ENCODE measurements at regions of chr18 and their contacts with region 1.

Region 1: DNA sequence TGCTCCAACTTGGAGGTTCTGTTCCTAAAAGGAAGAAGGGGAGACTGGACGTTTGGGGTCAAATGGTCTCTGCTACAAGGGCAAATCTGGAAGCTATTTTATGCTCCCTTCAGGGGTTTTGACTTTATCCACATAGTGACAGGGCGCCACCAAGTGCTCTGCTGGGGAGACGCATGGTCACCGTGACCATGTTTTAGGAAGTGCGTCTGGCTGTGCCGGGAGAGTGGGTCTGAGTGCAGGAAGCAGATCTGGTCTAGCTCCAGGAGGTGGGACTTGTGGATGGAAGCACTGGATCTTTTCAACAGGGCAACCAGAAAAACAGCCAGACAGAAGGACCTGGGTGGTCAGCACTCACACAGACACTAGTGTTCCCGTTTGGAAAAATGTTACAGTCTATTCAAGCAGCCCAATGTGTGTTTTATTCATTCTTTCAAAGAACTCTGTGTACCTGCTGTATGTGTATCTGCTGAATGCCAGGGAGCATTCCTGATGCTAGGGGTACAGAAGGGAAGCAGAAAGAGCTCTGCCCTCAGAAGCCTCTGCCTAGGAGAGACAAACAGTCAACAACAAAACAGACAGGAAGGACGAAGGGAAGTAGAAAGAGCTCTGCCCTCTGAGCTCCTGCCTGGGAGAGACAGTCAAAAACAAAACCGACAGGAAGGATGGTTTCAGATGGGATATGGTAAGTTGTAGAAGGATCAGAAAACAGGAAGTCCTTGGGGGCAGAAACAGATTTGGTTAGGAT is 14.3 kb downstream of the IMPA2 start:
- DNase-seq: peak; percentile 82
- ATAC-seq: peak; percentile 90 to 91

Region 2: DNA sequence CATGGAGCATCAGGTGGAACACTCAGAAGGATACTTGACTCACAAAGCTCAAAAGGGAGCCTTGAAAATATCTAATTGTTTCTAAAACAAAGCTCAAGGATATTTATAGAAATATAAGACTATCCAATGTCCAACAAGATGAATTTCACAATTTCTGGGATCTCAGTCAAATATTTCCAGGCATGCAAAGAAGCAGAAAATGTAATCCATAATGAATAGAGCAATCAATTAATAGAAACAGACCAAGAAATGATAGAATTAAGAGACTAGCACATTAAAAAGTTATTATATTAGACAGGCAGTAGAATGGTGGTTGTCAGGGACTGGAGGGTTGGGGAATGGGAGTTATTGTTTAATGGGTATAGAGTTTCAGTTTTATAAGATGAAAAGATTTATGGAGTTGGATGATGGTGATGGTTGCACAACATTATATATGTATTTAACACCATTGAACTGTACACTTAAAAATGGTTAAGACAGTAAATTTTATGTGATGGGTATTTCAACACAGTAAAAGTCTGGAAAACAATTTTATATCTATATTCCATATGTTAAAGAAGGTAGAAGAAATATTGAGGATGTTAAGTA is 656.3 kb before region 1 on chr18:
- intact Hi-C with region 1: no loop called
- DNase-seq: no peak
- ATAC-seq: no peak

Region 3: GRCh38 chr18:11710578-11710977 is 285.0 kb before region 1 on chr18:
- intact Hi-C with region 1: no loop called
- DNase-seq: no peak
- ATAC-seq: no peak

Region 4: DNA sequence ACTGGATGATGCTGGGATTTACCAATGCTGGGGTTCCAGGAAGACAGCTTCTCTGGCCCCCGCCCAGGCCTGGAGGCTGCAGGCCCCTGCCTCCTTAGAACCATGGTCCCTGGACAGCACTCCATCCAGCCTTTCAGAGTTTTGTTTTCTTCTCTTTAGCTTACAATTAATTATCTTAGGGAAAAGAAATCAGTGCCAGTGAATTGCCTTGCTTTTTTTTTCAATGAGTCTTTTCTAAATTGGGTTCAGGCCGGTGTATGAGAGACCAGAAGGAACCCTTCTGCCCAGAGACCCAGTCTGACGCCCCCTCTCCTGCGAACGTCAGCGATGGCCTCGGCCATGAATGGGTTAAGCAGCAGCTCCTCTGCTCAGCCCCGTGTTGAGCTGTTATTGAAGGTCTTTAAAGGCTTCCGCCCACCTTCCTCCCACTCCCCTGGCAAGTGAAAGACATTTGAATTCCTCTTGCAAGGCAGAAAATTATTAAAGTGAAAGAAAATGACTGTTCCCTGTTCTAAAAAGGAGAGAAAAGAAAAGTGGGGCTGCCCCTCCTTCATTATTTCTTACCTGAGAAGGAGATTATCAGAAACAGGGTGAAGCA is 210.1 kb before region 1 on chr18:
- intact Hi-C with region 1: no loop called
- DNase-seq: no peak
- ATAC-seq: peak in 1 of 2 donors; percentile 24

Region 5: DNA sequence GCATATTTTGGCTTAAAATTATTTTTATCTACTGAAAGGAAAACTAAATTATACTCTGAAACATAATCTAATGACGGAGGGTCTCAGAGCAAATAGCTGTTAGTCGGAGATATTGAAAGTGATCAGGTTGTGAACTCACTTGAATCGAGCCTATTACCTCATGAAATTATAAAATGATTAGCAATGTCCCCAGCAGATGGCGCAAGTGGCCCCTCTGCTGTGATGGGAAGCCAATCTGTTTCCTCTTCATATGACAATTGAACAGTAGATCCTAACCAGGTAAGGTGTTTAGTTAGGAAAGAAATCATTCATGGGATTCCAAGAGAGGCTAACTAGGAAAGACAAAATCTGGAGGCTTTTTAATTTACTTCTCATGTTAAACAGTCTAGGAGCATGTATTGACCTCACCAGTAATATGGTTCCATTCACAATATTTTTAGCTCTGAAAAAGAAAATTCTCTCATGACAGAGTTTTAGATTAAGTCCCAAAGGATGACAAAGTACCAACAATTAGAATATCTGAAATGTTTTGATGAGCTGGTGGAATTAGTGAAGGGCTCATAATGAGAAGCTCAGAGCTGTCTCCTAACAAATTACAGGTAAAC is 57.6 kb before region 1 on chr18:
- intact Hi-C with region 1: loop called (anchors 1 to 5 kb)
- DNase-seq: peak; percentile 76
- ATAC-seq: peak; percentile 77 to 81

Region 6: DNA sequence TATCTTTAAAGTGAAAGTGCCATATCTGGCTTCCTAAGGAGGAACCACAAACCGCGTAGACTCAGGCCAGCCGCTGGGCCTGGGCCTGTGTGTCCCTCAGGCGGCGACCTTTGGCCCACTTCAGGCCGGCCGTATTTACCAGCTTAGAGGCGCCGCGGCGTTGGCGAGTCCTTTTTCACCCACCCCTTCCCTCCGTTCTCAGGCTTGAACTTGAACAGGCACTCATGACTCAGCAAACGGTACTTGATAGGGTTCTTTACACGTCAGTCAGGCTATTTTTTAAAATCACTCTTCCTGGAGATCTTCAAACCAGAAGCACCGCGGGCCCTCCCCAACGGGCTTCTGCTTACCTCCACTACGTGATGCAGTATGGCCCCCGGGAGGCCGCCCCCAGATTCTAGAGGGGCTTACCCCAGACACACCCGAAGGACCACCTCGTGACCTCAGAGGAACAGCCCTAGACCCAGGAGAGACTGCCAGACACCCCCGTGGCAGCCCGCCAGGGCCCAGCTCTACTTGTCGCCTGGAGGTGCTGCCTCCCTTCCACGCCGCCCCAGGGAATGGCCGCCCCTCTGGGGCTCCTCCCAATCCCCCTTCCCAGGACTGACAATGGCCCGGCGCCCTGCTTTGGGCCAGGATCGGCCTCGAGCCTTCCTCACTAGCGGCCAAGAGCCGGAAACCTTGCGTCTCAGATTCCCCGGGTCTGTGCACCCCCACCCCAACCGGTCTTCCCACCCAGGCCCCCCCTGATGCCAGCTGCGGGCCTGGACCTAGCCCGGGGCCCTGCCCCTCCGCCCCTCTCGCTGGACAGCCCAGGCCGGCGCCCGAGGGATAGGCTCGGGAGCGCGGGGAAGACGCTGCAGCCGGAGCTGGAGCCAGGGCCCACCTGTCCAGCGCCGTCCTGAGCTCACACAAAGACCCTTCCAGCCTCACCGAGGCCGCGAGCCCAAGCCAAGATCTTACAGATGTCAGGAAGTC is 48.1 kb before region 1 on chr18:
- intact Hi-C with region 1: loop called in 1 of 2 experiments (anchors 5 kb)
- DNase-seq: peak; percentile 95
- ATAC-seq: peak; percentile 96 to 99